Activated T-helper 1 cell treated with anti-CD3 and anti-CD28 coated beads, Interleukin-12 subunit alpha, Interleukin-12 subunit beta, Interleukin-2, Interleukin-4 antibody, amounts not matched to agents 30 ng/mL and 10 ng/mL and 1 ng/mL, durations not matched to agents 14 hours and 24 hours and 36 hours (primary cell): ENCODE measurements at regions of chr4 and their contacts with region 1.

Region 1: DNA sequence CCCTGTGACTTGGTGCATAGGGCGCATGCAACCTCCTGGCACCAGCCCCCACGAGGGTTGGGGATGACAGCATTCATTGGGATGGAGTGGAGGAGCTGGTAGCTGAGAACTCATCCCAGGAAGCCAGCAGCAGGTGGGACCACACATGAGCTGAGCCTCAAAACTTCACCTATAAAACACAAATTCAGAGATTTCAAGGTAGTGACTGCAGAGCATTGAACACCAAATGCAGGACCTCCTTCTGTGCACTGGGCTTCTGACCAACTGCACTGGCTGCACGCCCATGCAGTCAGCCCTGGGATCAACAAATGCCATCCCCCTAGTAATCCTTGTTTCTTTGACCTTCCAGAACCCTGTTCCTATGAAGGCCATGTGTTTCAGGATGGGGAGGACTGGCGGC is 197.8 kb downstream of the FRAS1 start:
- DNase-seq: no peak
- H3K4me3 Mint-ChIP-seq: no peak overlapping the region
- H3K27ac Mint-ChIP-seq: no peak overlapping the region
- H3K4me1 Mint-ChIP-seq: no peaks in the 10 kb centered on the region
- H3K27me3 Mint-ChIP-seq: no peaks in the 10 kb centered on the region

Region 2: DNA sequence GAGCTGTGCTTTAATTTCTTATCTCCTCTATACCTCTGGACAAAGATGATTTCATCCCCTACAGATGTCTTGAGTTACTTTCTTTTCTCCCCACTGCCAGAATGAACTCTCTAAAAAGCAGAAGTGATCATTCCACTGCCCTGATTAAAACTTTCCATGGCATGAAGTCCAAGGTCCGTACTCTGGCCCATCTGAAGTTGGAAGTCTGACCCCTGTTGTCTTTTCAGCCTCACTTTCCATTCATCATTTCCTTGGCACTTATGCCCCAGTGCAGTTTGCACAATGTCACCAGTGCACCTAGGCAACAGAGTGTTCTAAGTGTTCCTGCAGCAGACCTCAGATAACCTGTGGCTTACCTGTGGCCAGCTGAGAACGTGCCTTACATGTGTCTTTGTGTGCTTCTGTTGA is 44.7 kb after region 1 on chr4:
- intact Hi-C with region 1: loop called (anchors 1 kb)
- DNase-seq: no peak
- H3K4me3 Mint-ChIP-seq: no peak overlapping the region
- H3K27ac Mint-ChIP-seq: no peak overlapping the region
- H3K4me1 Mint-ChIP-seq: peaks cover 12% of the 10 kb centered on the region
- H3K27me3 Mint-ChIP-seq: peaks cover 7% of the 10 kb centered on the region